Lower leg skin (tissue), 4 donors: ENCODE measurements at regions of chr2 and their contacts with region 1.

Region 1: DNA sequence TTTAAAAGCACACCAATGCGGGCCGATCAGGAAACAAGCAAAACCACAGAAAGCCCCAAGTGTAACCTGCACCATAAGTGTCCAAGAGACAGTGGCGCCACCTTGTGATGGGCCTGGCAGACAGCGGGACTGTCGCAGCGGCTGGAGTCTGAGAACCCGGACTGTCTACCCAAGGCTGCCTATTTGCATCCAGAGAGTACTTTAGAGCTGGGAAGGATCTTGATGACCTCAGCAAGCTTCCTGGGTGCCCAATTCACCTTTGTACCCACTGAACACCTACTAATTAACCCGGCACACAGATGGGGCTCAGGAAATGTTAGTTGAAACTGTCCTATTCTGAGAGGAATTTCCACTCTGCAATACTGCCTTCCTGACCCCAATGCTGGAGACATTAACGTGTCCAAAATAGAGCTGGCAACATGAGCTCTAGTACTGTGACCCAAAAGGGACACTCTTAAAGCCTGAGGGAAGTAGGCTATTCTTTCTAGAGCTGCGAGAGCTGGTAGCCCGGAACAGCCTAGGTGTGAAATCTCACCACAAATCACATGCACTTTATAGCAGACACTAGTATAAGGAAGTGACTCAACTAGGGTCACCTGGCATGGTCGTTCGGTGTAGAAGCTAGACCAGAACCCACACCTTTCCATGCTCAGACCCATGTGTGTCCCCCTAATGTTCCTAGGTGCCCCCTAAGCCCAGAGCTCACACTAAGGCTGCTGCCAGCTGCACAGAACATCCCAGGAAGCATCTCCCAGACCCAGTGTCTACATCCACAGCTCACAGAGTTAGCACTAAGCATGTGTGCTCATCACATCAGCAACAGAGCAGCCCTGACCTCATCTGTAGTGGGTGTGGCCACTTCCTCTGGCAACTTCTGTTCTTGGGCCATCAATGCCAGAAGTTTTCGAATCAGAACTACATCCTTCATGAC is 25.4 kb downstream of the POLR1A start:
- DNase-seq: peak; percentile 69 to 97
- H3K4me3 ChIP-seq: no peak overlapping the region
- CTCF ChIP-seq: peak in 1 of 3 donors; percentile 60
- POLR2A ChIP-seq: no peak

Region 2: GRCh38 chr2:85826990-85827878 is 253.0 kb before region 1 on chr2:
- intact Hi-C with region 1: loop called (anchors 5 kb)
- DNase-seq: peak; percentile 61 to 94
- H3K4me3 ChIP-seq: no peak overlapping the region
- CTCF ChIP-seq: peak in 1 of 3 donors; percentile 96
- POLR2A ChIP-seq: no peak

Region 3: GRCh38 chr2:85888684-85889626 is 191.3 kb before region 1 on chr2 and contains the start of gene ST3GAL5:
- intact Hi-C with region 1: loop called (anchors 5 kb)
- DNase-seq: peak; percentile 85 to 98
- H3K4me3 ChIP-seq: peak within 1 kb of the TSS; percentile 50
- CTCF ChIP-seq: no peak
- POLR2A ChIP-seq: no peak
- total RNA-seq, gene ST3GAL5: 6.9 to 8.6 (median 8.1) TPM

Region 4: GRCh38 chr2:85999061-85999831 is 81.0 kb before region 1 on chr2:
- intact Hi-C with region 1: no loop called
- DNase-seq: no peak
- H3K4me3 ChIP-seq: no peak overlapping the region
- CTCF ChIP-seq: no peak
- POLR2A ChIP-seq: no peak